ENCODE measurements at regions of chr3 and their contacts with region 1.

Region 1: DNA sequence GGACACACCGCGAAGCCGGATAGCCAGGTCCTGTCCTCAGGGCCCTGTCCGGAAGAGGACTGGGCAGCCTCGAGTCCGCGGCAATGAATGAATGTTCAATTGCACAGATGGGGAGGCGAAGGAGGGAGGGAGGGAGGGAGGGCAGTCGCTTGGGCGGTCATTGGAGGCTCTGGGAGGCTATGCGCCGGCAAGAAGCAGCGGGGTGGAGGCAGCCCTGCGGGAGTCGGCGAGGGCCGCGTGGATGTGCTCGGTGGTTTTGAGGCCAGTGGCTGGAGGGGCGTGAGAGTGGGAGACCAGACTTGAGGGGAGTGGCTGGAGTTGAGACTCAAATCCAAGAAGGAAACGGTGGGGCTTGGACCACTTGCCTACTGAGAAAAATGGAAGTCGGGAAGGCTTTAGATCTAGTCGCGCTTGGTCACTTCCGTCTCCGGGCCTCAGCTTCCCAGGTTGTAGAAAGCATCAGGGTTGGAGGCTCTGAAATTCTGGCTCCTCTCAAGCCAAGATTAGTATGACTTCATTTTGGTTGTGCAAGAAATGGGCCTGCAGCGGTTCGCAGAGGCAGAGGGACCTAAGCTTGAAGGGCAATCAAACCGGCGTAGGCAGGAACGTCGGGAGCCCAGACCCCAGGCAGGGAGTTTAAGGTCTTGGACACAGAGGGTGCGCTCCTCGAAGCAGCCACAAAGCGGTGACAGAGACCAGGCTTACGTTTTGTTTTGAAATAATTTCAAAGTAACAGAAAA is 21.1 kb upstream of the PLXND1 start:
- DNase-seq: peak; percentile 79
- H3K4me3 Mint-ChIP-seq: peak overlapping the region; percentile 85
- H3K27ac Mint-ChIP-seq: peak overlapping the region; percentile 63
- H3K4me1 Mint-ChIP-seq: peaks cover 12% of the 10 kb centered on the region
- H3K27me3 Mint-ChIP-seq: no peaks in the 10 kb centered on the region

Region 2: DNA sequence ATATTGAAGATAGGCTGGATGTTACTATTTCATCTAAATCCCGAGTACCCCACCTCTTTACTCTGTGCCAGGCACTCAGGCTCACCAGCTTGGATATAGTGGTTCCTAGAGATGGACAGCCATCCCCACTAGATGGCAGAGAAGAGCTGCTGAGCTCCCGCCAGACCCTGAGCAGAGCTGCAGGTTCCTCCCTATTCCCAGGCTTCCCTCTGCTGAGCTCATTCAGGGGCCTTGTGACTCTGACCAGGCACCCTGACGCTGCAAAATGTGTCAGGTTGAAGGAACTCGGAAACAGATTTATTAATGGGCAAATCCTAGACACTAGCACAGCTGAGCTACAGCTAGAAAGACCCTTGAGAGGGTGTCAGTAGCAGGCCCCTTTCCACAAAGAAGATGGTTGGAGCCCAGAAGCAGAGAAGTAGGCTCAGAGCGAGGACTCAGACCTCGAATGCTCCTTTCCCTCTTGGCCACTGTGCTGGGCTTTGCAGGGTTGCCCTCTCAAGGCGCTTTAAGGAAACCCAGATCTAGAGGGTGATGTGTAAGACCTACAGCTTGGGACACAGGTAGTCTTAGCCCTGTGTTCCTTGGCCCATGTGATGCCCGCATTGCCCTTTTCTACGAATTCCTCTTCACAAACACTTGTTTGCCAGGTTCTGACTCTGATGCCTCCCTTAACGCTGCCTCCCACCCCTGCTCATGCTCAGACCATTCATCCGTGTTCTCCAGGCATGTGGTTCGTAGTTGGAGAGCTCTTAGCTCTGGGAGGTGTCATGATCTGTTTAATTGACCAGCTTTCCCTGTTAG is 137.2 kb before region 1 on chr3:
- CTCF ChIA-PET with region 1: interaction called, 9 read pairs
- POLR2A ChIA-PET with region 1: no interaction called
- intact Hi-C with region 1: loop called (anchors 5 kb)
- DNase-seq: peak; percentile 65
- H3K4me3 Mint-ChIP-seq: no peak overlapping the region
- H3K27ac Mint-ChIP-seq: no peak overlapping the region
- H3K4me1 Mint-ChIP-seq: no peaks in the 10 kb centered on the region
- H3K27me3 Mint-ChIP-seq: no peaks in the 10 kb centered on the region

Region 3: GRCh38 chr3:129893581-129894070 is 266.0 kb after region 1 on chr3 and contains the start of gene TMCC1:
- CTCF ChIA-PET with region 1: interaction called, 7 read pairs
- POLR2A ChIA-PET with region 1: no interaction called
- intact Hi-C with region 1: loop called (anchors 1 kb)
- DNase-seq: peak; percentile 89
- H3K4me3 Mint-ChIP-seq: peak within 1 kb of the TSS; percentile 88
- H3K27ac Mint-ChIP-seq: peak within 1 kb of the TSS; percentile 82
- H3K4me1 Mint-ChIP-seq: peaks cover 35% of the 10 kb centered on the region
- H3K27me3 Mint-ChIP-seq: no peaks in the 10 kb centered on the region
- total RNA-seq, gene TMCC1: 20.6 to 20.8 TPM

Region 4: DNA sequence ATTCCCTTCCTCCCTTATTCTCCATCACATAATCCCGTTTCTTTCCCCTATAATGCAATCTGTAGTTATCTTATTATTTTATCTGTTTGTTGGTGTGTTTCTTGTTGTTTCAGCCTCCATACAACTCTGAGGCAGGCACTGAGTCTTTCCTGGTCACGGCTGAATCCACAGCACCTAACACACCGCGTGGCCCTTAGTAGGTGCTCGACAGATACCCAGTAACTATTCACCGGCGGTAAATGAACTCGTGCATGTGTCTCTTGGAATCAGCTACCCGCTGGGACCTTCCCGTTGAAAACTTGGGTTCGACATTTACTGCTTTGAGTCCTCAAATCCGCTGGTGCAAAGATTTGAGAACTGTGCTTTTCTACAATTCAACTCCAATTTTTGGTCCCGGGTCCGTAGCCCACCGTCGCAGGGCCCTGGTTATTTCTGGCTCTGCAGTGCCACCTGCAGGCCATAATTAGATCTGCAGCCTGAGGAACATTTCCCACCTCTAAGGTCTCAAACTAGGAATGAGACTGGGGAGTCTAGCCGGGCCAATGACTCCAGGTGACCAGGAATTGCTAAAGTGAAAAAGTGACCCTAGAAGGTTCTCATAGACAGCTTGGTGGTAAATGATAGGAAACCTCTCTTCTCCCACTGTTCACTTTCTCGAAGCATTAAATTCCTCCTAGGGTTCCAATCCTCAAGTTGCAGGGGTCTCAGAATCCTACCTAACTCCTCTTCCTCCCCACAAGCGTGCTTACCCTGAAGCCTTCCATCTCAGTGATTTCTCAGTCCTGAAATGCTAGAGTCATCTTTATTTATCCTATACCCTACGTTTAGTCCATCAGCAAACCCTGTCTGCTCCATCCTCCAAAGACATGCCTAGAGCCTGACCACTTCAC is 306.9 kb after region 1 on chr3:
- CTCF ChIA-PET with region 1: interaction called, 9 read pairs
- POLR2A ChIA-PET with region 1: no interaction called
- intact Hi-C with region 1: loop called (anchors 1 kb)
- DNase-seq: peak; percentile 31
- H3K4me3 Mint-ChIP-seq: no peak overlapping the region
- H3K27ac Mint-ChIP-seq: no peak overlapping the region
- H3K4me1 Mint-ChIP-seq: peaks cover 6% of the 10 kb centered on the region
- H3K27me3 Mint-ChIP-seq: peaks cover 4% of the 10 kb centered on the region

Region 5: GRCh38 chr3:130014526-130014925 is 386.9 kb after region 1 on chr3:
- CTCF ChIA-PET with region 1: no interaction called
- POLR2A ChIA-PET with region 1: no interaction called
- intact Hi-C with region 1: loop called (anchors 10 kb)
- DNase-seq: no peak
- H3K4me3 Mint-ChIP-seq: no peak overlapping the region
- H3K27ac Mint-ChIP-seq: no peak overlapping the region
- H3K4me1 Mint-ChIP-seq: no peaks in the 10 kb centered on the region
- H3K27me3 Mint-ChIP-seq: peaks cover 21% of the 10 kb centered on the region

Measured in activated CD4-positive, alpha-beta memory T cell treated with anti-CD3 and anti-CD28 coated beads for 36 hours (primary cell).